ENCODE measurements at regions of chr12 and their contacts with region 1.

Region 1: GRCh38 chr12:46675736-46676135 is 150.1 kb downstream of the SLC38A4 start:
- DNase-seq: peak; percentile 72
- H3K4me3 Mint-ChIP-seq: no peak overlapping the region
- H3K27ac Mint-ChIP-seq: peak overlapping the region; percentile 98
- H3K4me1 Mint-ChIP-seq: peaks cover 43% of the 10 kb centered on the region
- H3K27me3 Mint-ChIP-seq: no peaks in the 10 kb centered on the region
- CTCF ChIP-seq: peak; percentile 69

Region 2: DNA sequence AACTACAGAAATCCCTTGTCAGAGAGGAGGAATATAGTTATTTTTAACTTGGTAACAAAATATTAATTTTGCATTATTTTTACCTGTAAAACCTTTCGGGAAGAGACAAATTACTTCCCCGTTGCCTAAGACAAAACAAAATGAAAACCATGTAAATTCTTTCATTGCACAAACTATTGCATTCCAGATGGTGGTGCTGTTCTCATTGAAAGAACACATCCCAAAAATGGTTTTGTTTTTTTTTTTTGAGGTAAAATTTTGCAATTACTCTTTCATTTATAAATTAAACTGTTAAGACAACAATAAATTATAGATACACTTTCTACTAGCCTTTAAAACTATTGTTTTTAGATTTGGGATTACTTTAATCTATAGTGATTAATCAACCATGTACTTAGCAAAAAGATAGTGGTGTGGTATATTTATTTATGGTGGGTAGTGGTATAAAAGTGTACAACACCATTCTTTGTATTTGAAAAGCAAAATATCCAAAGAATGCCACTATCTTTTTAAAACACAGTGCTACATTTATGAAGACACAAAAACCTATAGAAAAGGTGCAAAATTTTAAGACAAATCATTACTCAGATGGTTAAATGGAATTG is 522.4 kb before region 1 on chr12:
- CTCF ChIA-PET with region 1: interaction called, 6 read pairs
- POLR2A ChIA-PET with region 1: interaction called, 11 read pairs
- intact Hi-C with region 1: loop called (anchors 2 kb)
- DNase-seq: peak; percentile 46
- H3K4me3 Mint-ChIP-seq: no peak overlapping the region
- H3K27ac Mint-ChIP-seq: no peak overlapping the region
- H3K4me1 Mint-ChIP-seq: peaks cover 5% of the 10 kb centered on the region
- H3K27me3 Mint-ChIP-seq: no peaks in the 10 kb centered on the region
- CTCF ChIP-seq: peak; percentile 77

Region 3: GRCh38 chr12:46357438-46358324 is 318.1 kb before region 1 on chr12:
- CTCF ChIA-PET with region 1: interaction called, 10 read pairs
- POLR2A ChIA-PET with region 1: interaction called, 497 read pairs
- intact Hi-C with region 1: no loop called
- DNase-seq: peak; percentile 72
- H3K4me3 Mint-ChIP-seq: no peak overlapping the region
- H3K27ac Mint-ChIP-seq: peak overlapping the region; percentile 7
- H3K4me1 Mint-ChIP-seq: peaks cover 18% of the 10 kb centered on the region
- H3K27me3 Mint-ChIP-seq: no peaks in the 10 kb centered on the region
- CTCF ChIP-seq: no peak

Region 4: DNA sequence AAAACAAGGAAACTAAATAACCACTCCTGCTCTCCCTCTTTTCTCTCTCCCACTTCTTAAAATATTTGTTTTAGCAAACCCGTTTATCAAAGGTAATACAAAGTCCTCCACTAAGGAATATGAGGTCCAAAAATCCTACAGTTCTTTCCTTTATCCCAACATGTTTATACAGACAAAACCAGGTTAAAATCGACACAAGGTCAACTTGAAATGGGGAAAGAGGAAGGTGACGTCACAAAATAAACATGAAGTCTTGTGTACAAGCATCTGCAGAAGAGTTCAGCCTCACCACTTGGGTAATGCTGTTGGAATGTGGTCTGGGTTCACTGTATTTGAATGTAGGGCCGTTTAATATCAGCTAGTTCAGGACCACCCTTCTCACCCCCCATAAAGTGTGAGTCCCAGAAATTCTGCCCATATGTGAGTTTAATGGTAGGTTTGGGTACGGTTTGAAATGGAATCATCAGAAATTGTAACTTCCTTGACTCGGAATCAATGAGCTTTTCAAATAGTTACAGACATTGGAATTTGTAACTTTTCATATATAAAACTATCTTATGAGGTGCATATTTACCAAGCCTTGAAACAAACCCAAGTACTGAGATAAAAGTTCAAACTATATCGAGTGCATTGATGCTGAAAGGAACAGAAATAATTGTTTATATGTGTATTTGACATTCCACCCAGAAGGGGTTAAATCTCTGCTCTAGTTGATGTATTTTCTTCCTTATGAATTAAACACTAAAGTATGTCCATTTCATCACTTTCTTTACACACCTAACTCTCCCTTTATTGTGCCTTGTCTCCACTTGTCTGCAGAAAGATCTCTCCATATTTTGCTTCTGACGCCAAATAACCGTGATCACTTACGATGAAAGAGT is 183.0 kb before region 1 on chr12:
- CTCF ChIA-PET with region 1: interaction called, 5 read pairs
- POLR2A ChIA-PET with region 1: interaction called, 41 read pairs
- intact Hi-C with region 1: loop called (anchors 5 kb)
- DNase-seq: peak; percentile 88
- H3K4me3 Mint-ChIP-seq: peak overlapping the region; percentile 61
- H3K27ac Mint-ChIP-seq: peak overlapping the region; percentile 100
- H3K4me1 Mint-ChIP-seq: peaks cover 32% of the 10 kb centered on the region
- H3K27me3 Mint-ChIP-seq: no peaks in the 10 kb centered on the region
- CTCF ChIP-seq: no peak

Region 5: DNA sequence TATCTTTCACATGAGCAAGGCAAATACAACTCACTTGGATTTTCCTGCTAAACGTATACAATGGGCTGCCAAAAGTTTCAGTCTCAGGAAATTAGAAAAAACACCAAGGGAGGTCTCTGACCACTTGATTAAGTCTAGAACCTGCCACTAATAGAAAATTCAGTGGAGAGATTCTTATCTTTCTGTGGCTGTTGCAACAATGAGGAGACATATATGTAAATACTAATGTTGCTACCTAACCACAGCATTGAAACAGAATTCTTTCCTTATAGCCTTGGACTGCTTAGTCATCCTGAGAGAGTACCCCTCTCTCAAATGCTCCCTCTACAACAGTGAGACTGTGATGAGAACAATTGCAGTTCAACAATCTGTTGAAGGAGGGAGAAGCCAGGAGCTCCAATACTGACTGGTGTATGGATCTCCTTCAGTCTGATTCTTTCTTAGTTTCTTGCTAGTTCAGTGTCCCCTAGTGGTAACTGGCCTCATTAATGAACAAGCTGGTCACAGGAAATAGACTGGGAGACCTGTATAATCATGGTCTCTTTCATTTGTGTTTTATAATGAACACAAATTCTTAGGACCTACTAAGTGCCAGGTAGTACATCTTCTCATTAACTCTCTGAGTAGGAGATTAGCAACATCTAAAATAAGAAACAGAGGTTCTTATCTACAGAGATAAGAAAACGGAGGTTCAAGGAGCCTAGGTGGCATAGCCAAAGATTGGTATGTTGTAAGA is 14.5 kb before region 1 on chr12:
- CTCF ChIA-PET with region 1: interaction called, 10 read pairs
- POLR2A ChIA-PET with region 1: interaction called, 125 read pairs
- intact Hi-C with region 1: no loop called
- DNase-seq: peak; percentile 79
- H3K4me3 Mint-ChIP-seq: no peak overlapping the region
- H3K27ac Mint-ChIP-seq: peak overlapping the region; percentile 80
- H3K4me1 Mint-ChIP-seq: peaks cover 63% of the 10 kb centered on the region
- H3K27me3 Mint-ChIP-seq: no peaks in the 10 kb centered on the region
- CTCF ChIP-seq: peak; percentile 57

Region 6: GRCh38 chr12:46825591-46826414 is 150.1 kb after region 1 on chr12 and contains the start of gene SLC38A4:
- CTCF ChIA-PET with region 1: no interaction called
- POLR2A ChIA-PET with region 1: no interaction called
- intact Hi-C with region 1: no loop called
- DNase-seq: no peak
- H3K4me3 Mint-ChIP-seq: no peak within 1 kb of the TSS
- H3K27ac Mint-ChIP-seq: no peak within 1 kb of the TSS
- H3K4me1 Mint-ChIP-seq: peaks cover under 1% of the 10 kb centered on the region
- H3K27me3 Mint-ChIP-seq: no peaks in the 10 kb centered on the region
- CTCF ChIP-seq: no peak
- total RNA-seq, gene SLC38A4: 0.12 TPM in 1 of 2 replicates, not detected in the other

Region 7: GRCh38 chr12:47021298-47021697 is 345.6 kb after region 1 on chr12:
- CTCF ChIA-PET with region 1: interaction called, 4 read pairs
- POLR2A ChIA-PET with region 1: interaction called, 3 read pairs
- intact Hi-C with region 1: loop called (anchors 1 kb)
- DNase-seq: peak; percentile 86
- H3K4me3 Mint-ChIP-seq: no peak overlapping the region
- H3K27ac Mint-ChIP-seq: no peak overlapping the region
- H3K4me1 Mint-ChIP-seq: peaks cover 34% of the 10 kb centered on the region
- H3K27me3 Mint-ChIP-seq: no peaks in the 10 kb centered on the region
- CTCF ChIP-seq: peak; percentile 57